Activated CD8-positive, alpha-beta T cell treated with anti-CD3 and anti-CD28 coated beads, Interleukin-2, amount 10 ng/mL, durations not matched to agents 7 days and 5 days (primary cell): ENCODE measurements at regions of chr10 and their contacts with region 1.

Region 1: DNA sequence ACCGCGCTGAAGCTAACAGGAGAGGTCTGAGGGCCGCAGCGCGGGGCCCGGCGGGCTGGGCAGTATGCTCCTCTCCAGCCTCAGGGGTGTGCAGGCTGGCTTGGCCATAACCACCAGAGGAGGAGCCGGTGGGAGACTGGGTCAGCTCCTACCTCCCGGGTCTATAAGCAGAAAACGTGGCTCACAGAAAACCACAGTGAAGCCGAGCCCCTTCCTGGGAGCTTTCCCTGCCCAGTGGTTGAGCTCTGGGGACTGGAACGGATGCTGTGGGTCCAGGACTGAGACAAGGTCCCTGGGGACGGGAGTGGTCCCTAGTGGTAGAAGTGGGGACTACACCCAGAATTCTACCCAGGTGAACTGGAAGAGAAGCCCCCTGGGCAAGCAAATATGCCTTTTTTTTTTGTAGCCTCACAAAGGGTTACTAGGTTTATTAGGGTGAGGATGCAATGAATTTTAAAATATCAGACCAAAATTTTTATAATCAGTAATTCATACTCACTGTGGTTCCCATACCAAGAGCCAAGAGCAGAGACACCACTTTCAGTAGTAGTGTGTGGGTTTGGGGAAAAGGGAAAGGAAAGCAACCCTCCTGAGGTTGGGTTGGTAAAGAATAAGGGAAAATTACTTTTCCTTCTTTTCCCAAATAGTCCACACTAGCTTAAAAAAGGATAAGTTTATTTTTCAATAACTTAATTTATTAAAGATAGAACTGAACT is 67.9 kb upstream of the PRKCQ start:
- DNase-seq: peak; percentile 84
- ATAC-seq: peak; percentile 88
- H3K4me3 Mint-ChIP-seq: no peak overlapping the region
- H3K27ac Mint-ChIP-seq: peak overlapping the region; percentile 46
- H3K4me1 Mint-ChIP-seq: peaks cover 48% of the 10 kb centered on the region
- H3K27me3 Mint-ChIP-seq: peaks cover 5% of the 10 kb centered on the region

Region 2: GRCh38 chr10:6445501-6446316 is 202.3 kb before region 1 on chr10:
- CTCF ChIA-PET with region 1: interaction called, 10 read pairs
- POLR2A ChIA-PET with region 1: no interaction called
- DNase-seq: peak; percentile 80
- ATAC-seq: peak; percentile 67
- H3K4me3 Mint-ChIP-seq: no peak overlapping the region
- H3K27ac Mint-ChIP-seq: peak overlapping the region; percentile 0
- H3K4me1 Mint-ChIP-seq: peaks cover 39% of the 10 kb centered on the region
- H3K27me3 Mint-ChIP-seq: no peaks in the 10 kb centered on the region

Region 3: DNA sequence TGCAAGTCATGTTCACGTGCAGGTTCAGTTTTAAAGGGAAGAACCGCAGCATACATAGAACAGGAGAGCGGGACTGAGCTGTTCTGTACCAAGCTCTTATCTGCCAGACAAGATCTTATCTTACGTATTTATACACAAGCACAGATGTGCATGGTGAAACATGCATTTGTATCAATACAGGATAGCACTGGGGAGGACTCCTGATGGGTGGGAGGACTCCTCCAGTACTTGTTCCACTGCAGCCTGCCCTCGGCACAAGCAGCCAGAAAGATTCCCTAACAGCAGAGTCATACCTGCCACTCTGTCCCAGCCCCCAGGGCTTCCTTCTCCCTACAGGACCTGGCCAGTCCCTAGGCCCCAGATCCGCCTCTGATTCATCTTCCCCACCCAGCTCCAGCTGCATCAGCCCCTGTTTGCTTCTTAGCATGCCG is 54.7 kb before region 1 on chr10:
- CTCF ChIA-PET with region 1: interaction called, 16 read pairs
- POLR2A ChIA-PET with region 1: interaction called, 3 read pairs
- DNase-seq: no peak
- ATAC-seq: peak; percentile 45
- H3K4me3 Mint-ChIP-seq: peak overlapping the region; percentile 25
- H3K27ac Mint-ChIP-seq: peak overlapping the region; percentile 96
- H3K4me1 Mint-ChIP-seq: peaks cover 93% of the 10 kb centered on the region
- H3K27me3 Mint-ChIP-seq: no peaks in the 10 kb centered on the region

Region 4: GRCh38 chr10:6607778-6608177 is 40.2 kb before region 1 on chr10:
- CTCF ChIA-PET with region 1: interaction called, 15 read pairs
- POLR2A ChIA-PET with region 1: no interaction called
- DNase-seq: no peak
- ATAC-seq: no peak
- H3K4me3 Mint-ChIP-seq: no peak overlapping the region
- H3K27ac Mint-ChIP-seq: peak overlapping the region; percentile 87
- H3K4me1 Mint-ChIP-seq: peaks cover 78% of the 10 kb centered on the region
- H3K27me3 Mint-ChIP-seq: no peaks in the 10 kb centered on the region

Region 5: DNA sequence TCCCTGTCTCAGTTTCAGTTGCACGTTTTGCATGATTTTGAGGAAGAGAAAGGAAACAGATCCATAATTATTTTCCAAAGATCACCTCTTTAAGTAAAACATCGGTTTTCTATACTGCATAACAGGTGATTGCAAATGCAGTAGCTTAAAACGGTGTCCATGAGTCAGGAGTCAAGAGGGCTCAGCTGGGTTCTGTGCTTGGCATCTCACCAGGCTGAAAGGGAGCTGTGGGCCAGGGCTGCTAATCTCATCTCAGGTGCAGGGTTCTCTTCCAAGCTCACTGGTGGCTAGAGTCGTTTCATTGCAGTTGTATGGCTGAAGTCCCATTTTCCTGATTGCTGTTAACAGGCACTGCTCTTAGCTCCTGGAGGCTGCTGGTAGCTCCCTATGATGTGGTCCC is 10.9 kb before region 1 on chr10:
- CTCF ChIA-PET with region 1: interaction called, 17 read pairs
- POLR2A ChIA-PET with region 1: no interaction called
- DNase-seq: no peak
- ATAC-seq: no peak
- H3K4me3 Mint-ChIP-seq: no peak overlapping the region
- H3K27ac Mint-ChIP-seq: no peak overlapping the region
- H3K4me1 Mint-ChIP-seq: peaks cover 31% of the 10 kb centered on the region
- H3K27me3 Mint-ChIP-seq: no peaks in the 10 kb centered on the region

Region 6: GRCh38 chr10:6659471-6659870 is 11.5 kb after region 1 on chr10:
- CTCF ChIA-PET with region 1: interaction called, 23 read pairs
- POLR2A ChIA-PET with region 1: no interaction called
- DNase-seq: no peak
- ATAC-seq: no peak
- H3K4me3 Mint-ChIP-seq: no peak overlapping the region
- H3K27ac Mint-ChIP-seq: no peak overlapping the region
- H3K4me1 Mint-ChIP-seq: peaks cover 20% of the 10 kb centered on the region
- H3K27me3 Mint-ChIP-seq: peaks cover 2% of the 10 kb centered on the region

Region 7: GRCh38 chr10:6721480-6721879 is 73.5 kb after region 1 on chr10:
- CTCF ChIA-PET with region 1: no interaction called
- POLR2A ChIA-PET with region 1: no interaction called
- DNase-seq: no peak
- ATAC-seq: no peak
- H3K4me3 Mint-ChIP-seq: no peak overlapping the region
- H3K27ac Mint-ChIP-seq: no peak overlapping the region
- H3K4me1 Mint-ChIP-seq: peaks cover 6% of the 10 kb centered on the region
- H3K27me3 Mint-ChIP-seq: peaks cover 39% of the 10 kb centered on the region